ENCODE measurements at regions of chr15 and their contacts with region 1.

Region 1: DNA sequence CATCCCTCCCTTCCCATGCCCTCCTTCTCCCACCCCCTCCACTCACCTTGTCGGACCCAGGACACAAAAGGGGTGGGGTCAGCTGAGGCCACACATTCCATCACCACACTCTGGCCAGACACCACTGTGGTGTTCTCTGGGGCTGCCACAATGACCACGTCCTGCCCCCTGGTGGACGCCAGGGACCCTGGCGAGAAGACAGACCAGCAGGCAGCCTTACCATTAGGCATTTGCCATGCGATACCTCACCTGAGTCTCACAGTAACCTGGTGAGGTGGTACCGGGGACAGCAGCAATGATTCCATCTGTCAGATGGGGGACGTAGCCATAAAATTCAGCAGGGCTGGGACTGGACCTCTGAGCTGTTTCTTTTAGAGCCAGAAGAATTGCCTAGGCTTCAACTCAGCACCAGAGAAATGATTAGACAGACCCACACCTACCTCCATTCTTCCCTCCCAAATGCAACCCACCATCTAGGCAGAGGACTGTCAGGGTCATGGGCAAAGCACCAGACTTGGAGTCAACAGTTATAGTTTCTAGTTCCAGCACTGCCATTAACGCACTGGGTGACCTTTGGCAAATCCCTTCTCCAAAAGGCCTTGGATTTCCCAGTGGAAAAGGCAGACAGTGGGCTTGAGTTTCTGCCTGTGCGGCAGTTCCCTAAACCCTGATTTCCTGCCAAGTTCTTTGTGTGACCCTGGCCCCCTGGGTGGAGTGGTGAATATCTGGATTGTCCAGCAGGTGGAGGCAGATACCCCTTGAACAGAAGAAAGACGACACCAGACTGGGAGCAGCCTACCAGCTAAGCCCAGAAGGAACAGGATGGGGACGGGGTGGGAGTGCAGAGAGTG is 21.8 kb downstream of the IGDCC4 start:
- DNase-seq: no peak
- H3K4me3 ChIP-seq: no peak overlapping the region
- H3K27ac ChIP-seq: peak overlapping the region; percentile 11
- H3K27me3 ChIP-seq: peaks cover 18% of the 10 kb centered on the region
- CTCF ChIP-seq: peak; percentile 88

Region 2: GRCh38 chr15:65318870-65319356 is 82.1 kb before region 1 on chr15:
- CTCF ChIA-PET with region 1: interaction called, 56 read pairs
- POLR2A ChIA-PET with region 1: no interaction called
- DNase-seq: no peak
- H3K4me3 ChIP-seq: no peak overlapping the region
- H3K27ac ChIP-seq: no peak overlapping the region
- H3K27me3 ChIP-seq: peaks cover 9% of the 10 kb centered on the region
- CTCF ChIP-seq: peak; percentile 86

Region 3: GRCh38 chr15:65421360-65422070 is 20.5 kb after region 1 on chr15:
- CTCF ChIA-PET with region 1: interaction called, 15 read pairs
- POLR2A ChIA-PET with region 1: no interaction called
- DNase-seq: peak; percentile 46
- H3K4me3 ChIP-seq: peak overlapping the region; percentile 68
- H3K27ac ChIP-seq: peak overlapping the region; percentile 65
- H3K27me3 ChIP-seq: peaks cover 18% of the 10 kb centered on the region
- CTCF ChIP-seq: no peak

Region 4: GRCh38 chr15:65434201-65434600 is 33.2 kb after region 1 on chr15:
- CTCF ChIA-PET with region 1: interaction called, 50 read pairs
- POLR2A ChIA-PET with region 1: interaction called, 3 read pairs
- DNase-seq: no peak
- H3K4me3 ChIP-seq: no peak overlapping the region
- H3K27ac ChIP-seq: no peak overlapping the region
- H3K27me3 ChIP-seq: peaks cover 13% of the 10 kb centered on the region
- CTCF ChIP-seq: no peak

Region 5: GRCh38 chr15:65466901-65467300 is 65.9 kb after region 1 on chr15:
- CTCF ChIA-PET with region 1: interaction called, 10 read pairs
- POLR2A ChIA-PET with region 1: no interaction called
- DNase-seq: no peak
- H3K4me3 ChIP-seq: no peak overlapping the region
- H3K27ac ChIP-seq: no peak overlapping the region
- H3K27me3 ChIP-seq: no peaks in the 10 kb centered on the region
- CTCF ChIP-seq: no peak

Region 6: GRCh38 chr15:65530314-65531122 is 129.5 kb after region 1 on chr15 and contains the start of gene HACD3:
- CTCF ChIA-PET with region 1: no interaction called
- POLR2A ChIA-PET with region 1: interaction called, 10 read pairs
- DNase-seq: no peak
- H3K4me3 ChIP-seq: peak within 1 kb of the TSS; percentile 92
- H3K27ac ChIP-seq: peak within 1 kb of the TSS; percentile 52
- H3K27me3 ChIP-seq: no peaks in the 10 kb centered on the region
- CTCF ChIP-seq: no peak
- polyA plus RNA-seq, gene HACD3: 104 and 130 TPM in 2 replicates

Region 7: DNA sequence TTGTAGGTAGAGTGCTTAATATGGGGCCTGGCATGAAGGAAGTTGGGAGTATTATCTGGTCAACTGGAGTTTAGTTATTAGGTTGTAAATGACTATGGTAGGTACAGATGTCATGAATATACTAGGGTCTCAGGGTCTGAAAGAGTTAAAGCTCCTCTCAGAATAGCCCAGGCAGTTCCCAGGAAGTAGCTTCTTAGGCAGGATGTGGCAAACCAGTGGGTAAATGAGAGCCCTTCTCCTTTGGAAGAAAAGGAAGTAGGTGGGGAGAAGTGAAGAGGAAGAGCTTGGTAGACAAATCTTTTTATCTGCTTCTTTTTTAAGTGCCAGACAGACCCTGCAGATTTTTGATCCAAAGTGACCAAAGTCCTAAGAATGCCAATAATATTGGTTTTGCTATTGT is 1010.2 kb after region 1 on chr15:
- CTCF ChIA-PET with region 1: no interaction called
- POLR2A ChIA-PET with region 1: no interaction called
- DNase-seq: no peak
- H3K4me3 ChIP-seq: no peak overlapping the region
- H3K27ac ChIP-seq: no peak overlapping the region
- H3K27me3 ChIP-seq: no peaks in the 10 kb centered on the region
- CTCF ChIP-seq: no peak

Measured in AG04450 (cell line).